Mammary epithelial cell (primary cell): ENCODE measurements at regions of chr4 and their contacts with region 1.

Region 1: GRCh38 chr4:76179398-76180318 is 31.5 kb upstream of the NUP54 start:
- DNase-seq: peak; percentile 62
- H3K4me3 ChIP-seq: no peak overlapping the region
- H3K27ac ChIP-seq: no peak overlapping the region
- H3K4me1 ChIP-seq: no peaks in the 10 kb centered on the region
- H3K27me3 ChIP-seq: no peaks in the 10 kb centered on the region
- CTCF ChIP-seq: peak; percentile 84 to 96

Region 2: DNA sequence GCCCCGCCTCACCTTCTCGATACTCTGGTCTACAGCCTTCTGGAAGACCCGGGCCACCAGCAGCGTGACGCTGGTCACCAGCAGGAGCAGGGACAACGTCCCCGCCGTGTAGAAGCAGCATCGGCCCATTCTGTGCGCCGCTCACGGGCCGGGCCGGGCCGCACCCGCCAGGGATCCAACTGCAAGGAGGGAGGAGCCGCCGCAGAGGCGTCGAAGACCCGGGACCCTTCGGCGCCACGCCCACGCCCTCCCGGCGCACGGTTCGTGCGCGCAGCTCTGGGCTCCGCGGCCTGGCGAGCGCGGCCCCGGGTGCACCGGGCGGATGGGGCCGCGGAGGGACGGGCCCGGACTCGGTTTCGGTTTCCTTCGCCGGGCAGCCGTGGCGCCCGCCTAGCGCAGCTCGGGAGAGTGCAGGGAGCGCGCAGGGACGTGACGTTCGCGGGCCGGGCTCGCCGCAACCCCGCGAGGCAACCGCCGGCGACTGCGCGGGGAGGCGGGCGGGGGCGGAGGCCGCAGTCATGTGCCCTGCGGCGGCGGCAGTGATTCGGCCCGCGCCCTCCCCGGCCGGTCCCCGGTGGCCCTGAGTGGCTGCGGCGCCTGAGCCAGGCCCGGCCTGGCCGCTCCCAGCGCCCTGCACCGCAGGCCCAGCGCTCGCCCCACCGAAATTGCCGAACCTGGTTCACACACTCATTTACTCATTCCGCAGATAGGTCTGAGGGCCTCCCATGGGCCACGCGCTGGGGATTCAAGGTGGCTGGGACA is 33.9 kb after region 1 on chr4 and contains the start of gene SCARB2:
- CTCF ChIA-PET with region 1: no interaction called
- dilution Hi-C with region 1: no loop called
- in situ Hi-C with region 1: no loop called
- intact Hi-C with region 1: loop called (anchors 2 kb)
- DNase-seq: peak; percentile 84
- H3K4me3 ChIP-seq: peak within 1 kb of the TSS; percentile 87 to 90 (median 89)
- H3K27ac ChIP-seq: peak within 1 kb of the TSS; percentile 77
- H3K4me1 ChIP-seq: peaks cover 32% of the 10 kb centered on the region
- H3K27me3 ChIP-seq: no peaks in the 10 kb centered on the region
- CTCF ChIP-seq: no peak
- total RNA-seq, gene SCARB2: 75.6 to 103 TPM

Region 3: GRCh38 chr4:76246025-76246424 is 66.4 kb after region 1 on chr4:
- CTCF ChIA-PET with region 1: no interaction called
- dilution Hi-C with region 1: no loop called
- in situ Hi-C with region 1: no loop called
- intact Hi-C with region 1: loop called (anchors 1 kb)
- DNase-seq: no peak
- H3K4me3 ChIP-seq: no peak overlapping the region
- H3K27ac ChIP-seq: no peak overlapping the region
- H3K4me1 ChIP-seq: peaks cover 3% of the 10 kb centered on the region
- H3K27me3 ChIP-seq: no peaks in the 10 kb centered on the region
- CTCF ChIP-seq: peak in 1 of 2 donors; percentile 43

Region 4: DNA sequence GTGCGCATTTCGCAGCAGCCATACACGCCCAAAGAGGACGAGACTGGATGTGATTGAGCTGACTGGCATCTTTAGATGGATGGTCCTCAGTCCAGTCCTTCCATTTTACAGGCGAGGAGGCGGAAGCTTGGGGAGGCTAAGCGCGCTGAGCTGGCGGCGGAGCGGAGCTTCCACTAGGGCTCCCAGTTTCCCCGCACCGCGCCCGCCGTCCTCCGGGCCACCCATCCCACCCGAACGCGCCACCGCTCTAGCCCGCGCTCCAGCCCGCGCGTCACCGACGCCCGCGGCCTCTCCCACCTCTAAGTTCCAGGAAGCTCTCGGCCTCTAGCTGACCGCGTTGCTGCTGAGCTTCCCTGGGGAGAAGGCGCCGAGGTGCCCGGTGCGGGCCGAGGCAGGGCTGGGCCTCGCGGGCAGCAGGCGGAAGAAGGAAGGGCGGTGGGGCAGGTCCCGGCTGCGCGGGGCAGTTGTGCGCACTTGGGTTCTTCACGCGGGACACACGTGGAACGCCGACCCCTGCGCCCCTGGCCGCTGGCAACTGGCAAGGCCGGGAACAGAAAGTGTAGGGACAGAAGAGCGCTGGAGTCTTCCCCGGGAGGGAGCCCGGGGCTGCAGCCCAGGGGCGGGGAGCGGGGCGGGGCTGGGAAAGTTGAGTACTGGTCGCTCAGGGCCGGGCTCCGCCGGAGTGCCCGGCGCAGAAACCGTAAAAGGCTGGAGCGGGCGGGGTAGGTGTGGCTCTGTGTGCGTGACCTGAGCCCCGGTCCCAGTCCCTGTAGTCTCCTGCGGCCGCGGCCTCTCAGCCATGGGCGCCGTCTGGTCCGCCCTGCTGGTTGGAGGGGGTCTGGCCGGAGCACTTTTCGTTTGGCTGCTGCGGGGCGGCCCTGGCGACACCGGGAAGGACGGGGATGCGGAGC is 126.6 kb after region 1 on chr4 and contains the start of gene STBD1:
- CTCF ChIA-PET with region 1: interaction called, 5 read pairs
- dilution Hi-C with region 1: no loop called
- in situ Hi-C with region 1: loop called in 1 of 2 experiments (anchors 25 kb)
- intact Hi-C with region 1: loop called (anchors 1 kb)
- DNase-seq: peak; percentile 81
- H3K4me3 ChIP-seq: peak within 1 kb of the TSS; percentile 74 to 93 (median 89)
- H3K27ac ChIP-seq: peak within 1 kb of the TSS; percentile 62
- H3K4me1 ChIP-seq: peaks cover 22% of the 10 kb centered on the region
- H3K27me3 ChIP-seq: no peaks in the 10 kb centered on the region
- CTCF ChIP-seq: peak in 1 of 2 donors; percentile 10
- total RNA-seq, gene STBD1: 6.4 to 11.7 TPM

Region 5: GRCh38 chr4:76377911-76378310 is 198.3 kb after region 1 on chr4:
- CTCF ChIA-PET with region 1: interaction called, 6 read pairs
- dilution Hi-C with region 1: no loop called
- in situ Hi-C with region 1: no loop called
- intact Hi-C with region 1: loop called (anchors 1 kb)
- DNase-seq: no peak
- H3K4me3 ChIP-seq: no peak overlapping the region
- H3K27ac ChIP-seq: no peak overlapping the region
- H3K4me1 ChIP-seq: peaks cover 8% of the 10 kb centered on the region
- H3K27me3 ChIP-seq: no peaks in the 10 kb centered on the region
- CTCF ChIP-seq: peak; percentile 47 to 59

Region 6: DNA sequence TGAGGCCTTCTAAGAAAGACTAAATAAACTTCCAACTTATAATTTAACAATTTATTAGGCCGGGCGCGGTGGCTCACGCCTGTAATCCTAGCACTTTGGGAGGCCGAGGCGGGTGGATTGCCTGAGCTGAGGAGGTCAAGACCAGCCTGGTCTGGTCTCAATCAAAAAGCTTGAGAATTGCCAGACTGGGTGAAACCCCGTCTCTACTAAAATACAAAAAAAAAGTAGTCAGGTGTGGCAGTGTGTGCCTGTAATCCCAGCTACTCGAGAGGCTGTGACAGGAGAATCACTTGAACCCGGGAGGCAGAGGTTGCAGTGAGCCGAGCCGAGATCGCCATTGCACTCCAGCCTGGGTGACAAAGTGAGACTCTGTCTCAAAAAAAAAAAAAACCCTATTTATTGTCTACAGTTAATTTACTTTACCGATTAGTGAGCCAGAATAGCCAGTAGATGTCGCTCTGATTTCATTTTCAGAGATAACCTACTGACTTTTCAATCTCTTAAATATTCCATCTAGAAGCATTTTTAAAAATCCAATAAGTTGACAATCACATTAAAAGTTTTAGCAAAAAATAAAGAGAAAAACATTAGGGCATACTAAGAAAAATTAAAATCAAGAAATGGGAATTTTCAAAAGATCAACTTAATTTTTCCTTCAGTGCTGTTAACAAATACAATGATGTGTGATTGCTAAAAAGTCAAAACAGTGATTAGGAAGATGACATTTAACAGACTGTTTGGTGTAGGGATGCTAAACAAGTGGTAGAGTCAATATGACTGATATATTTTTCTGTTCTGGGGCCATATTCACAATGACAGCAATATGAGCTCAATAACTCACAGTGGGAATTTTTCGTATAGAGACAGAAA is 251.1 kb after region 1 on chr4:
- CTCF ChIA-PET with region 1: no interaction called
- dilution Hi-C with region 1: no loop called
- in situ Hi-C with region 1: no loop called
- intact Hi-C with region 1: loop called (anchors 1 kb)
- DNase-seq: peak; percentile 23
- H3K4me3 ChIP-seq: no peak overlapping the region
- H3K27ac ChIP-seq: no peak overlapping the region
- H3K4me1 ChIP-seq: peaks cover 17% of the 10 kb centered on the region
- H3K27me3 ChIP-seq: no peaks in the 10 kb centered on the region
- CTCF ChIP-seq: peak; percentile 57 to 65

Region 7: DNA sequence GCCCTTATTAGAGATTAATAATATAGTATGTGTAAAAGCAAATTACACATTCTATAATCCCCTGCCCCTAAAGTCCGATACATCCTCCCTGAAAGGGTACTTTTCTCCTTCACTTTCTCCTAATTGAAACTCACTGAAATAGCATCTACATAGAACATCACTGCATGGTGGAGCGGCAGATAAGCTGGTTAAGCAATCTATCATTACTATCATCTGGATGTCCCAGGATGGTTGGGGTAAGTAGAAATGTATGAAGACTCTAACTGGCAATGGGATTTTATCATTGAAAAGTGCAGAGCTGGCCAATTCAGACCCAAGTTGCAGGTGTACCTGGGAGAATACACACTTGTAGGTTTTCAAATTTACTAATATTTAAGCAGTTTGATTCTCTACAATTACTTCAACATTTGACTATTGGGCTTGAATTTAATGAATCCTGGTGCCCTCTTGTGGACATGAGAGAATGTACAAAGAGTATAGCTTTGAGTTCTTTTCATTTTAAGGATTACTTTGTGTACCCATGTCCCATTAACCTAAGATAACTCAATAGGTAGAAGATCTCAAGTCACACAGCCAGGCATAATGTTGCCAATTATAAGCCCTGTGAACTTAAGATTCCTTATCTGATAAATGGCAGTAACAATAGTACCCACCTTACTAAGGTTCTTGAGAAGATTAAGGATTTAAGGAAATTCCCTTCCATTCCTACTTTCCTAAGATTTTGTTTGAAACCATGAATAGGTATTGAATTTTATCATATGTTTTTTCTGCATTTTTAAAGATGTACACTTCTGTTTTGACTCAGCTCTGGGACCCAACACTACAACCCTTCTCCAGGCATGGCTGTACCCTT is 325.2 kb after region 1 on chr4:
- CTCF ChIA-PET with region 1: no interaction called
- dilution Hi-C with region 1: no loop called
- in situ Hi-C with region 1: no loop called
- intact Hi-C with region 1: loop called (anchors 1 kb)
- DNase-seq: peak; percentile 27
- H3K4me3 ChIP-seq: no peak overlapping the region
- H3K27ac ChIP-seq: no peak overlapping the region
- H3K4me1 ChIP-seq: peaks cover 3% of the 10 kb centered on the region
- H3K27me3 ChIP-seq: no peaks in the 10 kb centered on the region
- CTCF ChIP-seq: peak; percentile 49 to 67